ENCODE measurements at regions of chr2 and their contacts with region 1.

Region 1: DNA sequence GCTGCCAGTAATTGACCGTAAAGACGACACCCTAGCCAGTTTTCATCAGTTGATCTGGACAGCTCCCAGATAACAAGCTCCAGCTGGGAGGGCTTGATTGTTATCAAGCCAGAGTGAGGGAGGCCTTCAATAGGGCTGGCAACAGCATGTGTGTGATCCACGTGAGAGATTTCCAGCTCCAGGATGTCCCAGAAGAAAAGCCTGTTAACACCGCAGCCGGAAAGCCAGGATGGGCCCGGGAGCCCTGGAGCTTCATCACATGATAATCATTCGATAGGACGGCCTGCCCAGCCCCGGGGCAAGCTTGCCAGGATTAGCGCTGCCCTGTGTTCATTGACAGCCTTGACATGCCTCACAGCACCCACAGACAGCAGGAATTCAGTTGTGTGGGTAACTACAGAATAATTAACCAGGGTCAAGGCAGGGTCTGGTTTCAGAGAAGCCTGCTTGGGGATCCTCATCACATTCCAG is 182.5 kb downstream of the C1D start:
- DNase-seq: peak; percentile 60
- H3K4me3 ChIP-seq: no peak overlapping the region
- H3K27ac ChIP-seq: peak overlapping the region; percentile 94 to 96
- H3K4me1 ChIP-seq: peaks cover 19 to 35% of the 10 kb centered on the region in 2 experiments
- H3K27me3 ChIP-seq: no peaks in the 10 kb centered on the region
- CTCF ChIP-seq: no peak
- EP300 ChIP-seq: peak; percentile 81 to 97; a peak in 3 of 4 replicates
- RAD21 ChIP-seq: no peak

Region 2: DNA sequence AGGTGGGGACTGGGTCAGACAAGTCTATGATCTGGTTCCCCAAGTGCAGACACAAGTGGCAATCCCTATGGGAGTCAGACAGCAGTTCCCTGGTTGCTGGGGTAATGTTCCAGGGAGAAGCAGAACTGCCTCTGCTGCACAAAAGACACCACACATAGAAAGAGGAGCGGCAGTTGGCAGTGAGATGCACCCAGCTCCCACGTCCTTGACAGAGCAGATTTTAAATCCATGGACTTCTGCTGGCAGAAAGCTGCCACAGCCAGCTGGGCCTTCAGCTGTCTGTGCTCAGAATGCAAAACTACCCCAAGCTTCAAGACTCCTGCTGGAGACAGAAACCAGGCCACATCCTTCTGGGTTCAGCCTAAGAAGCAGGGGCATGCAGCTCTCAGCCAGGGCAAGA is 336.0 kb before region 1 on chr2:
- CTCF ChIA-PET with region 1: no interaction called
- POLR2A ChIA-PET with region 1: no interaction called
- DNase-seq: no peak
- H3K4me3 ChIP-seq: no peak overlapping the region
- H3K27ac ChIP-seq: no peak overlapping the region
- H3K4me1 ChIP-seq: peaks cover 0 to 4% of the 10 kb centered on the region in 2 experiments; a peak in 1 of 4 replicates
- H3K27me3 ChIP-seq: no peaks in the 10 kb centered on the region
- CTCF ChIP-seq: no peak
- EP300 ChIP-seq: no peak
- RAD21 ChIP-seq: no peak

Region 3: GRCh38 chr2:68031542-68032160 is 151.3 kb after region 1 on chr2:
- CTCF ChIA-PET with region 1: interaction called, 28 read pairs
- POLR2A ChIA-PET with region 1: no interaction called
- DNase-seq: peak; percentile 48
- H3K4me3 ChIP-seq: no peak overlapping the region
- H3K27ac ChIP-seq: peak overlapping the region; percentile 50 to 80
- H3K4me1 ChIP-seq: peaks cover 4 to 23% of the 10 kb centered on the region in 2 experiments
- H3K27me3 ChIP-seq: no peaks in the 10 kb centered on the region
- CTCF ChIP-seq: peak; percentile 77
- EP300 ChIP-seq: no peak
- RAD21 ChIP-seq: peak; percentile 97

Measured in SK-N-SH (cell line).